ENCODE measurements at regions of chr5 and their contacts with region 1.

Region 1: GRCh38 chr5:157820593-157821252 is 38.2 kb downstream of the CLINT1 start:
- DNase-seq: peak in 1 of 2 experiments; percentile 54
- H3K4me3 ChIP-seq: no peak overlapping the region
- H3K4me3 Mint-ChIP-seq: no peak overlapping the region
- H3K27ac Mint-ChIP-seq: peak overlapping the region; percentile 25
- H3K4me1 ChIP-seq: peaks cover 24% of the 10 kb centered on the region
- H3K4me1 Mint-ChIP-seq: peaks cover 17% of the 10 kb centered on the region
- H3K27me3 ChIP-seq: no peaks in the 10 kb centered on the region
- H3K27me3 Mint-ChIP-seq: no peaks in the 10 kb centered on the region
- CTCF ChIP-seq: peak; percentile 54 to 56

Region 2: GRCh38 chr5:157603333-157604190 is 217.2 kb before region 1 on chr5:
- CTCF ChIA-PET with region 1: no interaction called
- POLR2A ChIA-PET with region 1: no interaction called
- intact Hi-C with region 1: no loop called
- DNase-seq: no peak
- H3K4me3 ChIP-seq: no peak overlapping the region
- H3K4me3 Mint-ChIP-seq: no peak overlapping the region
- H3K27ac Mint-ChIP-seq: no peak overlapping the region
- H3K4me1 ChIP-seq: peaks cover 7% of the 10 kb centered on the region; the same call in 1 of the 2 replicates
- H3K4me1 Mint-ChIP-seq: peaks cover 11% of the 10 kb centered on the region
- H3K27me3 ChIP-seq: no peaks in the 10 kb centered on the region
- H3K27me3 Mint-ChIP-seq: no peaks in the 10 kb centered on the region
- CTCF ChIP-seq: no peak

Region 3: GRCh38 chr5:157855404-157855994 is 34.8 kb after region 1 on chr5:
- CTCF ChIA-PET with region 1: interaction called, 3 read pairs
- POLR2A ChIA-PET with region 1: no interaction called
- intact Hi-C with region 1: loop called (anchors 2 kb)
- DNase-seq: peak; percentile 63 to 73
- H3K4me3 ChIP-seq: no peak overlapping the region
- H3K4me3 Mint-ChIP-seq: no peak overlapping the region
- H3K27ac Mint-ChIP-seq: no peak overlapping the region
- H3K4me1 ChIP-seq: peaks cover 9% of the 10 kb centered on the region
- H3K4me1 Mint-ChIP-seq: peaks cover 6% of the 10 kb centered on the region
- H3K27me3 ChIP-seq: no peaks in the 10 kb centered on the region
- H3K27me3 Mint-ChIP-seq: no peaks in the 10 kb centered on the region
- CTCF ChIP-seq: peak; percentile 65 to 68